WTC11 (cell line): ENCODE measurements at regions of chr20 and their contacts with region 1.

Region 1: GRCh38 chr20:3276680-3277015 is 37.7 kb upstream of the SLC4A11 start:
- DNase-seq: peak; percentile 23
- ATAC-seq: peak; percentile 82
- H3K4me3 Mint-ChIP-seq: no peak overlapping the region
- H3K27ac Mint-ChIP-seq: no peak overlapping the region
- H3K4me1 Mint-ChIP-seq: no peaks in the 10 kb centered on the region
- H3K27me3 Mint-ChIP-seq: no peaks in the 10 kb centered on the region
- CTCF ChIP-seq: no peak; the same call in 1 of the 2 replicates

Region 2: GRCh38 chr20:3218307-3218988 is 58.2 kb before region 1 on chr20:
- CTCF ChIA-PET with region 1: interaction called, 11 read pairs
- POLR2A ChIA-PET with region 1: no interaction called
- DNase-seq: peak; percentile 91
- ATAC-seq: peak; percentile 94
- H3K4me3 Mint-ChIP-seq: no peak overlapping the region
- H3K27ac Mint-ChIP-seq: no peak overlapping the region
- H3K4me1 Mint-ChIP-seq: no peaks in the 10 kb centered on the region
- H3K27me3 Mint-ChIP-seq: no peaks in the 10 kb centered on the region
- CTCF ChIP-seq: peak; percentile 99

Region 3: DNA sequence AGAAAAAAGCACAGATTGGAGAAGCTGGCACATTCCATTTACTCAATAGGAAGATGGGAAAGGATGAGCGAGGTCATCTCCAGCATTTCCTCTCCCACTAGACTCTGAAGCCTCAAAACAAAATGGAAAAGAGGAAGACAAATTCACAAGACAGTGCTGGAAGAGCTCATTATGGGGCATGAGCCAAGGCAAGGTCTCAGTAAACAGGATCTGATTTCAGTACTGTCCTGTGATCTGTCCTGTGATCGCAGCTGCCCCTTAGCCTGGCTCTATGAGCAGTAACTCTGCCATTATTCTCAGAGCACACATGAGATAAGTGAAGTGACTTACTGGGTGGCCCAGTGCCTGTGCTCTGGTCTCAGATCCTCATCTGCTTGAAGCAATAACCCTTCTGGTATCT is 30.4 kb after region 1 on chr20:
- CTCF ChIA-PET with region 1: interaction called, 16 read pairs
- POLR2A ChIA-PET with region 1: no interaction called
- DNase-seq: no peak
- ATAC-seq: no peak
- H3K4me3 Mint-ChIP-seq: no peak overlapping the region
- H3K27ac Mint-ChIP-seq: no peak overlapping the region
- H3K4me1 Mint-ChIP-seq: peaks cover 8% of the 10 kb centered on the region
- H3K27me3 Mint-ChIP-seq: no peaks in the 10 kb centered on the region
- CTCF ChIP-seq: no peak

Region 4: DNA sequence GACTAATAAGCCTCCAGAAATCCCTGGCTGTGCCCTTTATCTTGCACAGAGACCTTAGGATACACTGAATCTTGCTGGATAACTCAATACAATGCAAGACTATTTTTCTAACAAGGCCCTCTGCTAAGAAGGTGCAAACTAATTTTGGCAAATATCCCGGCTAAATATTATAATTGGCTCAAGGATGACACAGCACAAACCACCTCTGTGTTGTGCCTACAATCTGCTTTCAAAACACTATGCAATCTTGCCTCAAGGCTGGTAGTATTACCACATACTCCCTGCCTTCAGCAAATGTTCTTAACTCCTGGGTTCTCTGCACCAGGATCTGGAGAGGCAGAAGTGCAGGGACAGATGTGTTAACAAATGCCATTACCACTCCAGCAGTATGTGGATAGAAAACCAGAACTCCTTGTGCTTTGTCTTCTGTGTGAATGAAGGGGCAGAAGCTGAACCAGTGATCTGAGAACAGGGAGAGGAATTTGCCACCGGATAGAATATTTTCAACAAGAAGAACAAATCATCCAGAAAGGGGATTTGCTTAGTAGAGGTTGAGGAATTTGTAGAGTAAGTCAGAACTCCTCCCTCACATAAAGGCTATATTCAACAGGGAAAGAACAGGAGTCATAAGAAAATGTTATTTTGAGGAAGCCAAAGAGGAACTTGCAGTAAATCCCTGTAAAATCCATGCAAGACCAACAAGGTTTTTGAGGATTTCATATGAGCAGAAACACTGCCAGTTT is 36.5 kb after region 1 on chr20:
- CTCF ChIA-PET with region 1: interaction called, 14 read pairs
- POLR2A ChIA-PET with region 1: no interaction called
- DNase-seq: no peak
- ATAC-seq: no peak
- H3K4me3 Mint-ChIP-seq: no peak overlapping the region
- H3K27ac Mint-ChIP-seq: no peak overlapping the region
- H3K4me1 Mint-ChIP-seq: no peaks in the 10 kb centered on the region
- H3K27me3 Mint-ChIP-seq: no peaks in the 10 kb centered on the region
- CTCF ChIP-seq: no peak